SK-N-SH (cell line): ENCODE measurements at regions of chr10 and their contacts with region 1.

Region 1: GRCh38 chr10:47340608-47341170 is 7.5 kb upstream of the RBP3 start:
- DNase-seq: peak; percentile 83
- H3K4me3 ChIP-seq: peak overlapping the region in 1 of 2 experiments; percentile 46; a peak in 1 of 4 replicates
- H3K27ac ChIP-seq: no peak overlapping the region; a peak in 1 of 4 replicates
- H3K4me1 ChIP-seq: peaks cover 0 to 10% of the 10 kb centered on the region in 2 experiments; a peak in 1 of 4 replicates
- H3K27me3 ChIP-seq: peaks cover 32% of the 10 kb centered on the region
- CTCF ChIP-seq: peak; percentile 94
- EP300 ChIP-seq: no peak
- RAD21 ChIP-seq: peak; percentile 84

Region 2: DNA sequence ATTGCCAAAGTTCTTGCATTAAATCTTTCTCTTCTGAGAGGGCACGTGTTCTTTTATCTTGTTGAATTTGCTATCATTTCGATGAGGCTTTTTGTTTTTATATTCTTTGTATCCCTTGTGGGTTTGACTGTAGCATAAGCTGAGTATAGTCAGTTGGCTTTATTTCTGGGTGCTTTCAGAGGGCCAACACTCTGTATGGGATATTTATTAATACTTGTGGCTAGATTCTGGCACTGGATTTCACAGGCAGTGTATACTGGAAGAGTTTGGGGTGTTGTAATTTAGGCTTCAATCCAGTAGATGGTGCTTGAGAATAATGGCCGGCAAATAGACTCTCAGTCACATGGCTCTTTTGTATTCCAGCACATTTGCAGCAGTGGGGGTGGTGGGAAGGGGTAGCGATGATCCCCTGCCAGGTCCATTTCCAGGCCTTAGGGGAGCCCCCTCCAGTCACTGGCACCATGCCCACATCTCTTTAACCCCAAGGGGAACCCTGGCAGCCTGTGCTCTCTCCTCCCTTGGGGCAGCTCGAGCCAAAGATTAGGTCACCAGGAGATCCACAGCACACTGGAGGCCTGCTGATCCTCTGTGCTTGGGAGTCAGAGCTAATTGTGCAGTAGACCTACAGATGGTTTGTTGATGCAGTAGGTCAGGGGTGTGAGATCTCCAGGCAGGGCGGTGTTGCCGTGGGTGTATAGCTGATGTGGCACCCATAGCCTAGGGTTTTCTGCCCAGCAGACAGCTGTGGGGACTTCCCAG is 347.7 kb before region 1 on chr10:
- CTCF ChIA-PET with region 1: interaction called, 21 read pairs
- POLR2A ChIA-PET with region 1: no interaction called
- DNase-seq: peak; percentile 52
- H3K4me3 ChIP-seq: no peak overlapping the region
- H3K27ac ChIP-seq: no peak overlapping the region
- H3K4me1 ChIP-seq: no peaks in the 10 kb centered on the region; a peak in 1 of 4 replicates
- H3K27me3 ChIP-seq: no peaks in the 10 kb centered on the region
- CTCF ChIP-seq: peak; percentile 58
- EP300 ChIP-seq: no peak
- RAD21 ChIP-seq: peak; percentile 78

Region 3: DNA sequence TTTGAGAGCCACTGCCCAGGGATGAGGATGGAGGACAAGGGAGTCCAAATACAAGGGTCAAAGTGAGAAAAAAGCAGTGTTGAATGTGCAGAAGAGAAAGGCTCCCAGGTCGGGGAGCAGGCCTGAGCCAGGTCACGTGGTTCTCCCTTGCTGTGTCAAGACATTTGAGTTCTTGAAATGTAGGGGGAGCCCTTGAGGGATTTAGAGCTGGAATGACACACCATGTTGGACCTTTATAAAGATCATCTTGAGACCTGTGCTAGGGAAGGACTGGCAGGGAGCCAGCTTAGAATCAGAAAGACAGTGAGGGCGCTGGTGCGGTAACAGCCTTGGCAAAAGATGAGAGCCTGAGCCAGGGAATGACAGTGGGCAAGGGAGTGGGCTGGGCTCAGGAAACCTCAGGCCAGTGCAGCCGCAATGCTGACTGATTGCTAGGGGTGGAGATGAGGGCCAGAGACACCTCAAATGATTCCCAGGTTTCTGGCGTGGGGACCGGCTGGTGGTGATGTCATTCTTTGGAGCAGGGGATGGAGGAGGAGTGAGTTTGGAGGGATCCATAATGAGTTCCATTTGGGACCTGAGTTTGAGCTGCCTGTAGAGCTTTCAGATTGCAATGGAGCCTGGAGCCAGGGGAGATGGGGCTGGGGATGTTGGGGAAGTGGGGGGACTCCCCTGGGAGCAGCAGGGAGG is 309.3 kb before region 1 on chr10:
- CTCF ChIA-PET with region 1: interaction called, 31 read pairs
- POLR2A ChIA-PET with region 1: no interaction called
- DNase-seq: no peak
- H3K4me3 ChIP-seq: no peak overlapping the region
- H3K27ac ChIP-seq: peak overlapping the region in 1 of 2 experiments; percentile 67; a peak in 1 of 4 replicates
- H3K4me1 ChIP-seq: peaks cover 0 to 64% of the 10 kb centered on the region in 2 experiments; a peak in 2 of 4 replicates
- H3K27me3 ChIP-seq: peaks cover 11% of the 10 kb centered on the region; the same call in 1 of the 2 replicates
- CTCF ChIP-seq: peak; percentile 21; the same call in 1 of the 2 replicates
- EP300 ChIP-seq: no peak; a peak in 1 of 4 replicates
- RAD21 ChIP-seq: peak; percentile 21; the same call in 1 of the 2 replicates

Region 4: DNA sequence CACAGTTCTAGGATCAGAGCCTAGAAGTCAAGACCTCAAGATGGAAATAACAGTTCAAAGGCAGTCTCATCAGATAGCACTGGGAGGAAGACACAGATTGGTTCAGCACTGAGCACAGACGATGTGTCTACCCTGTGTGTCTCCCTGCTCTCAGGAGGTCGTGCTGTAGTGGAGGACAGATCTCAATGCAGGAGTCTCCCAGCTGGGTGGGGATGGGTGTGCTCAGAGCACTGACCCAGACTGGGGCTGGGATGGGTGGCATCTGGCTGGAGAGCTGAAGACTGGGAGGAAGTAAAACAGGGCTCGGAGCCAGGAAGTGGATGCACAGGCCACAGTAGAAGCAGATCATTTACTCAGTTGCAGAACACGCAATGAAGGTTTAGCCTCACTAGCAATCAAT is 110.2 kb before region 1 on chr10:
- CTCF ChIA-PET with region 1: no interaction called
- POLR2A ChIA-PET with region 1: no interaction called
- DNase-seq: no peak
- H3K4me3 ChIP-seq: no peak overlapping the region
- H3K27ac ChIP-seq: no peak overlapping the region
- H3K4me1 ChIP-seq: peaks cover 0 to 14% of the 10 kb centered on the region in 2 experiments; a peak in 1 of 4 replicates
- H3K27me3 ChIP-seq: no peaks in the 10 kb centered on the region; the same call in 1 of the 2 replicates
- CTCF ChIP-seq: no peak
- EP300 ChIP-seq: no peak
- RAD21 ChIP-seq: no peak

Region 5: GRCh38 chr10:47300429-47300931 is 40.2 kb before region 1 on chr10:
- CTCF ChIA-PET with region 1: no interaction called
- POLR2A ChIA-PET with region 1: no interaction called
- DNase-seq: peak; percentile 73
- H3K4me3 ChIP-seq: peak overlapping the region in 1 of 2 experiments; percentile 49; a peak in 2 of 4 replicates
- H3K27ac ChIP-seq: peak overlapping the region in 1 of 2 experiments; percentile 71; a peak in 1 of 4 replicates
- H3K4me1 ChIP-seq: peaks cover 0 to 58% of the 10 kb centered on the region in 2 experiments; a peak in 1 of 4 replicates
- H3K27me3 ChIP-seq: peaks cover 43% of the 10 kb centered on the region
- CTCF ChIP-seq: no peak
- EP300 ChIP-seq: no peak
- RAD21 ChIP-seq: no peak

Region 6: DNA sequence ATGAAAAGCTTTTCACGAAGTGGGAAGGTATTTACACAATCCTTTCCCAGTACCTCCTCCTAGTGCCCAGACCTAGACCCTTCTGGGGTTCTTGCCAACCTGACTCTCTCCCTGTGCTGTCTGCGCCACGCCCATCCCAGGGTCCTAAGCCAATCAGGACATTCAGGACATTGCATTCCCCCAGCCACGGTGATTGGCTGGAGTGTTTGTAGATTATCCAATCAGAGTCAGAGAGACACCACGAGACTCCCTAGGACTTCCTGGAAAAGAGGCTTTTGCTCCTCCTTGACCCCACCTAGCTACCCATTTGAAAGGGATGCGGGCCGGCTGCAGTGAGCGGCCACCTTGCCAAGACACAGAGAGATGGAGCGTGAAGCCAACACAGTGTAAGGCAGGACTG is 22.0 kb before region 1 on chr10:
- CTCF ChIA-PET with region 1: interaction called, 18 read pairs
- POLR2A ChIA-PET with region 1: no interaction called
- DNase-seq: no peak
- H3K4me3 ChIP-seq: no peak overlapping the region
- H3K27ac ChIP-seq: no peak overlapping the region
- H3K4me1 ChIP-seq: peaks cover 0 to 12% of the 10 kb centered on the region in 2 experiments; a peak in 1 of 4 replicates
- H3K27me3 ChIP-seq: peaks cover 6% of the 10 kb centered on the region; the same call in 1 of the 2 replicates
- CTCF ChIP-seq: no peak
- EP300 ChIP-seq: no peak
- RAD21 ChIP-seq: no peak

Region 7: DNA sequence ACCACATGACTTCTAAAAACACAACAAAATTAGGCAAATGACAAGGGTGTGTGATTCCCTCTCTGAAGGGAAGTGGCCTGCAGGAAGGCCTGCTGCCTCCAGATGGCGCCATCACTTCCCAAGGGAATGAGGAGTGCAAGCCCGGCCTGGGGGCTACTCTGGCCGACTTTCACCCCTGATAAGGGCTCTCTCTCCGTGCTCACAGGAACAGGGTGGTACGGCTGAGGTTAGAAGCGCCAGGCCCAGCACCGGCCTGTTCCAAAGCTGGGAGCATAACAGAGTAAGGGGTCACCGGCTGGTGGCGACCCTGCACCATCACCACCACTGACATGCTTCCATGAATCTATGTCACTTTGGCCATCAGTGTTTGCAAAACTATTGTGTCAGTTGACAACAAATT is 20.6 kb after region 1 on chr10:
- CTCF ChIA-PET with region 1: interaction called, 23 read pairs
- POLR2A ChIA-PET with region 1: no interaction called
- DNase-seq: peak; percentile 81
- H3K4me3 ChIP-seq: peak overlapping the region in 1 of 2 experiments; percentile 38; a peak in 1 of 4 replicates
- H3K27ac ChIP-seq: no peak overlapping the region
- H3K4me1 ChIP-seq: peaks cover 0 to 8% of the 10 kb centered on the region in 2 experiments; a peak in 1 of 4 replicates
- H3K27me3 ChIP-seq: no peaks in the 10 kb centered on the region
- CTCF ChIP-seq: peak; percentile 80
- EP300 ChIP-seq: no peak
- RAD21 ChIP-seq: peak; percentile 58

Region 8: DNA sequence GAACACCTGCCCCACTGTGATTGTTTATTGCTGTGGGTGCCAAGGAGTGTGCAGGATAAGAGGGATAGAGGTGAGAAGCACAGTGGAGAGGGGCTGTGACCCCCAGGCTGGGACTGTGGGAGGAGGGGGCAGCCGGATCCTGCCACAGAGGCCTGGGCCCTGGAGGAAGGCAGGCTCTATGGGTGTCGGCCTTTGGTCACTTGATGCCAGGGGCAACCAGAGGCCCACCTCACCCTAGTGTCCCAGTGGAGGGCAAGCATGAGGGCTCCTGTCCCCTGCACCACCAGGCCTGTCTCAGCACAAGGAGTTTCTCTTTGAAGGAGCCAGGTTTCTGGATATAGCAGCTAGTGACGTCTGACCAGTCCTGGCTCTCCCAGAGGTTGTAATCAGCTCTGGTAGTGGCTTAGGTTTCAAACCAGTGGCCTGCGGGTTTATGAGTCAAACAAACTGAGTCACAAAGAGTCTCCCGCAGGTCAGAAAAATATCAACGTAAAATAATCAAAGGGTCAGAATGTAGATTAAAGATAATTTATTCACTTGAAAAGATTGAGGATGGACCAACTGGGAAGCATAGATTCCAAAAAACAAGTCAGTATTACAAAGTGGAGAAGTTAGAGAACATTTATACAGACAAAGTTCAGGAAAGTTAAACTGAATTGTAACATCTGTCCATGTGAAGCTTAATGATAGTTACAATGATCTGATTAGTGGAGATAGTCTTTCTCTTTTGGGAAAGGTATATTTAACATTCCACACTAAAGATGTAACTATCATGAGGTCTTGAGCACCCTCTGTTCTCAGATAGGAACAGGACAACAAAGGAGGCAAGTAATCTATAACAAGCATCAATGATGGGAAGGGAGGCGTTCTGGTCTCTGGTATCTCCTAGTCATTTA is 80.6 kb after region 1 on chr10:
- CTCF ChIA-PET with region 1: no interaction called
- POLR2A ChIA-PET with region 1: no interaction called
- DNase-seq: no peak
- H3K4me3 ChIP-seq: no peak overlapping the region
- H3K27ac ChIP-seq: no peak overlapping the region
- H3K4me1 ChIP-seq: no peaks in the 10 kb centered on the region; a peak in 1 of 4 replicates
- H3K27me3 ChIP-seq: no peaks in the 10 kb centered on the region
- CTCF ChIP-seq: no peak
- EP300 ChIP-seq: no peak
- RAD21 ChIP-seq: no peak